H1 (cell line): ENCODE measurements at regions of chr1 and their contacts with region 1.

Region 1: DNA sequence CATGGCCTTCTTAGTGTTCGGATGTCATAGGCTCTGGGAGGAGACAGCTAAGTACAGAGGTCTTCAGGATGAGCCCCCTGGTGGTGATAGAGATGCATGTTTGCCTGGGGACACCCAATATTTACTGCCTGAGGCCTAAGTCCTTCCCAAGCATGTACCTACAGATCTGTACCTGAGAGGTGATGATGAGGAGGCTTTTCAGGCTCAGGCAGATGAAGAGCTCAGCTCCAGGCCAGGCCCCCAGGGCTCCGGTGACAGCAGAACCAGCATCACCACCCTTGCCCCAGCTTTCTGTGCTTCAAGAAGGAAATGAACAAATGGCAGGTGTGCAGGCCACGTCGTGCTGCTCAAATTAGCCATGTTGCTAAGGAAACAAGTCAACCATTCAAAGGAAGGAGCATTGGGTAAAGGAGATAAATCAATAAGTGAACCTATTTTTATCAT is 21.1 kb downstream of the CACNA1E start:
- DNase-seq: peak; percentile 21 to 52
- H3K4me3 ChIP-seq: no peak overlapping the region
- H3K27ac ChIP-seq: no peak overlapping the region
- H3K4me1 ChIP-seq: no peaks in the 10 kb centered on the region; a peak in 1 of 7 replicates
- H3K27me3 ChIP-seq: peaks cover 0 to 1% (median 0%) of the 10 kb centered on the region in 4 experiments; a peak in 1 of 7 replicates
- CTCF ChIP-seq: peak; percentile 59 to 91 (median 59)
- EP300 ChIP-seq: no peak
- POLR2A ChIP-seq: no peak
- RAD21 ChIP-seq: peak; percentile 50 to 68

Region 2: DNA sequence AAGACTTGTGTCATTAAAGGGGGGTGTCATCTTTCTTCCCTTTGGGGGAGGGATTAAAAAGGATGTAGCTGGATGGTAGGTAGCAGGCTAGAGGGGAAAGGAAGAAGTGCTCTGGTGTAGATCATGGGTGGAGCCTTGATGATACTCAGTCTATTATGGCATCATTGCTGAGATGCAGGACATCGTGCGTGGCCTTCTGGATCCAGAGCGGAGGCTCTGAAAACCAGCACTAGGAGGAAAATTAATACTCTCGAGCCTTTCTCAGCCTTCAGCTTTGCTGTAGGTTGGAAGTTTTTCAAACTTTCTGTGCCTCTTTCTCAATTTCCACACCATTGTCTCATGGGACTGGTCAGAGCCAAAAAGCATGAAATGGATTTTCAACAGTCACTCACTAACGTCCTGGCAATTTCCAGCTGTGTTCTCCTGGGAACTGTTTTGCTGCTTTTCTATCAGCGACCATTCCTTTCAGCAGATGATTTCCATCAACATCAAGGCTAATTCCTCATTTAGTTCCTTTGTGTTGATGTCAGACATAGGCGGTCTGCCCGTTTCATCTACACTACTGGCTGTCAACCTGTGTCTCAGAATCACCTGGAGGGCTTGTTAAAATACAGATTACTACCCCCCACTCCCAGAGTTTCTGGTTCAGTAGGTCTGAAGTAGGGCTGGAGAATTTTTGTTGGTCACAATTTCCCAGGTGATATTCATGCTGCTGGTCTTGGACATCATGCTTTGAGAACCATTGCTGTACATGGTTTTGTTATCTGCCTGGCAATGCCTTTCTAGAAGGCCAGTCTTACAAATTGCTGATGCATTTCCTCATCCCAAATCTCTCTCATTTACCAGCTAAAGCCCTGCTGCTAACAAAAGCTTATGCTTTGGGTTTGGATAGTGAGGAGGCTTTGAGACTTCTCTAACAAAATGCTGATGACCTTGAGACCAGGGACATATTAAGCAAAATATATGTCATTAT is 13.4 kb before region 1 on chr1:
- CTCF ChIA-PET with region 1: interaction called, 32 read pairs
- POLR2A ChIA-PET with region 1: no interaction called
- DNase-seq: no peak
- H3K4me3 ChIP-seq: no peak overlapping the region
- H3K27ac ChIP-seq: no peak overlapping the region
- H3K4me1 ChIP-seq: peaks cover 0 to 4% (median 0%) of the 10 kb centered on the region in 4 experiments; a peak in 1 of 7 replicates
- H3K27me3 ChIP-seq: peaks cover 0 to 16% (median 5%) of the 10 kb centered on the region in 4 experiments; a peak in 6 of 7 replicates
- CTCF ChIP-seq: no peak
- EP300 ChIP-seq: no peak
- POLR2A ChIP-seq: no peak
- RAD21 ChIP-seq: no peak

Region 3: DNA sequence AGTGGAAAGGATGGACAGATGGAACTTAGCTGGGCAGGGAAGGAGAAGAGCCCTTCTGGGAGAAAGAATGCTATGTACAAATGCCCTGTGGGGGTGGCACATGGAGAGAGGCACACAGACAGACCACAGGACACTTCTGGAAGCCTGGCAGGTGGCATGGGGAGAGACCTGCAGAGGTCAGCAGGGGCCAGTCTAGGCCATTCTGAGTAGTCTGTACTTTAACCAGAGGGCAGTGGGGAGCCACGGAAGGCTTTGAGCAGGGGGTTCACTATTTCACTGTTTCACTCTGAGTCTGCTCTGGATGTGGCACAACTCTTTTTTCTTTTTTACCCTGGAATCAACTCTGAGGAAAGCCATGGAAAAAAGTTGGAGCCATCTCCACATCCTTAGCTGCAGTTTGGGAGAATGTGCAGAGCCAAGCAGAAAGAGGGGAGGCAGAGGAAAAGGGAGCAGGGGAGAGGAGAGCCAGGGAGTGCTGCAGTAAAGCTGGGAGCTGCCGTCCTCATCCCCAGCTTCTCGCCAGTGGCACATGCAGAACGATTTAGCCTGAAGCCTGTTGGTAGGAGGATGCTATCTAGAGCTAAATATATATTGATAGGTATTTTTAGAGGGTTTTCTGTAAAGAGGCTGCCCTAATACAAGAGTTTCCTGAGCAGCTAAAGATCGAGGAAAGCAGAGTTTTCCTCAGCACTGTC is 12.9 kb after region 1 on chr1:
- CTCF ChIA-PET with region 1: interaction called, 16 read pairs
- POLR2A ChIA-PET with region 1: no interaction called
- DNase-seq: no peak
- H3K4me3 ChIP-seq: no peak overlapping the region
- H3K27ac ChIP-seq: no peak overlapping the region
- H3K4me1 ChIP-seq: peaks cover 0 to 3% (median under 1%) of the 10 kb centered on the region in 4 experiments; a peak in 1 of 7 replicates
- H3K27me3 ChIP-seq: no peaks in the 10 kb centered on the region
- CTCF ChIP-seq: no peak; a peak in 1 of 4 replicates
- EP300 ChIP-seq: no peak
- POLR2A ChIP-seq: no peak
- RAD21 ChIP-seq: peak in 1 of 2 experiments; percentile 45; a peak in 1 of 4 replicates